Right ventricle myocardium inferior (tissue), 1 donor: ENCODE measurements at regions of chr19 and their contacts with region 1.

Region 1: DNA sequence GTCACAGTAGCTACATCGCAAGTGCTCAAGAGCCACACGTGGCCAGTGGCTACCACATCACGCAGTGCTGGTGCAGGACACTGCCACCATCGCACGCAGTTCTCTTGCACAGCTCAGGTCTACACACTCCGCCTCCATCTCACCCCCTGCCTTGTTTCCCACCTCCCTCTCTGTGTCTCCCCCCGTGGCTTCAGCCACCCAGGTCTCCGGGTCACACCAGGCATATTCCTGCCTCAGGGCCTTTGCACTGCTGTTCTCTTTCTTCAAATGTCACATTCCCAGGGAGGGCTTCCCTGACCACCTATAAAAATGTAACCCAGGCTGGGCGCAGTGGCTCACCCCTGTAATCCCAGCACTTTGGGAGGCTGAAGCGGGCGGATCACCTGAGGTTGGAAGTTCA is 10.6 kb downstream of the CCDC8 start:
- DNase-seq: peak; percentile 27
- ATAC-seq: no peak

Region 2: DNA sequence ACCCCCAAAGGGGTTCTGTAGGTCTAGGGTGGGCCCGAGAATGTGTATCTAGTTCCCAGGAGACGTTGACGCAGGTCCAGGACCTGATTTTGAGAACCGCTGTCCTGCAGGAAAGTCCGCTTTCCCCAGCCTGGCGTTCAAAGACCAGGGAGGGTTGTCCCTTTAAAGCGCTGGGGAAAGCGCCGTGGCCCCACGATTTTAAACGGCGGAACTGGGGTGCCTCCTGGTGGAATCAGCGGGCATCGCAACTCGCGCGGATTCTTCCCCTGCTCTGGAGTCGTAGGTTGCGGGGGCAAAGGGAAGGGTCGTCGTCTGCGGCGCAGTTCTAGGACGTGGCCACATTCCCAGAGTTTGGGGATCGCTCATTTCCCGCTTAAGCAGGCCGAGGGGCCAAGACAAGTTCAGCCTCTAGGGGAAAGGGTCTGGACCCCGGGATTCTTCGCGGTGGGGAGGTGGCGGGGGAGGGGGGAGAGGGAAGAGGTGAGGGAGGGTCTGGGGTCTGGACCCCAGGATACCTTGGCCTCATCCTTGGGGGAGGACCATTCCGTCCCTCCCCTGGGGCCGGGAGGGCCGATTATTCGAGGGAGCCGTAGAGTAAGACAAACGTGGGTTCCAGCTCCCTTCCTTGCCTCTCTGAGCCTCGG is 85.2 kb after region 1 on chr19:
- intact Hi-C with region 1: loop called (anchors 1 kb)
- DNase-seq: peak; percentile 88
- ATAC-seq: peak; percentile 79